ENCODE measurements at regions of chr3 and their contacts with region 1.

Region 1: DNA sequence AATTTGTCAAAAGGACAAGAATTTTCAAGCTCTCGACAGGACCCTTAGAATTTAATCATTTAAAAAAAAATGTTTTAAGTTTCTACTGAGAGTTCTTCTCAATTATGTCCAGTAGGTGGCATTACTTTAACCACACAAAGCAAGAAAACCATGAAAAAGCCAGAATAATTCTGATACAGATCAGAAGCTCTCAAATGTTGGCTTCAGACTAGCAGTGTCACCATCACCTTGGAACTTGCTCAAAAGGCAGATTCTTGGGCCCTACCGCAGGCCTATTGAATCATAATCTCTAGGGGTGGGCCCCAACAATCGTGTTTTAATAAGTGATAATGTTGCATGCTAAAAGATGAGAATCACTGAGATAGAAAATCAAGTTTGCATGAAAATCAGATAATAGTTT is 99.5 kb upstream of the KCNMB2 start:
- DNase-seq: no peak
- ATAC-seq: peak; percentile 80
- H3K4me3 ChIP-seq: no peak overlapping the region
- H3K27ac ChIP-seq: no peak overlapping the region
- H3K4me1 ChIP-seq: peaks cover 5% of the 10 kb centered on the region
- H3K27me3 ChIP-seq: no peaks in the 10 kb centered on the region
- CTCF ChIP-seq: peak; percentile 28 to 57 (median 51); a peak in 5 of 6 replicates
- EP300 ChIP-seq: no peak
- POLR2A ChIP-seq: no peak
- RAD21 ChIP-seq: peak; percentile 74

Region 2: GRCh38 chr3:178182337-178182779 is 254.4 kb before region 1 on chr3:
- CTCF ChIA-PET with region 1: no interaction called
- POLR2A ChIA-PET with region 1: no interaction called
- RAD21 ChIA-PET with region 1: no interaction called
- SMC1A ChIA-PET with region 1: no interaction called
- in situ Hi-C with region 1: no loop called
- intact Hi-C with region 1: no loop called
- DNase-seq: no peak
- ATAC-seq: no peak
- H3K4me3 ChIP-seq: no peak overlapping the region
- H3K27ac ChIP-seq: no peak overlapping the region
- H3K4me1 ChIP-seq: no peaks in the 10 kb centered on the region
- H3K27me3 ChIP-seq: no peaks in the 10 kb centered on the region; a peak in 1 of 4 replicates
- CTCF ChIP-seq: no peak
- EP300 ChIP-seq: no peak
- POLR2A ChIP-seq: no peak
- RAD21 ChIP-seq: no peak

Region 3: GRCh38 chr3:178419071-178419470 is 17.7 kb before region 1 on chr3:
- CTCF ChIA-PET with region 1: interaction called, 19 read pairs
- POLR2A ChIA-PET with region 1: no interaction called
- RAD21 ChIA-PET with region 1: interaction called, 6 read pairs
- SMC1A ChIA-PET with region 1: interaction called, 8 read pairs
- in situ Hi-C with region 1: no loop called
- intact Hi-C with region 1: no loop called
- DNase-seq: no peak
- ATAC-seq: no peak
- H3K4me3 ChIP-seq: no peak overlapping the region
- H3K27ac ChIP-seq: no peak overlapping the region
- H3K4me1 ChIP-seq: no peaks in the 10 kb centered on the region
- H3K27me3 ChIP-seq: no peaks in the 10 kb centered on the region
- CTCF ChIP-seq: no peak
- EP300 ChIP-seq: no peak
- POLR2A ChIP-seq: no peak
- RAD21 ChIP-seq: no peak

Region 4: DNA sequence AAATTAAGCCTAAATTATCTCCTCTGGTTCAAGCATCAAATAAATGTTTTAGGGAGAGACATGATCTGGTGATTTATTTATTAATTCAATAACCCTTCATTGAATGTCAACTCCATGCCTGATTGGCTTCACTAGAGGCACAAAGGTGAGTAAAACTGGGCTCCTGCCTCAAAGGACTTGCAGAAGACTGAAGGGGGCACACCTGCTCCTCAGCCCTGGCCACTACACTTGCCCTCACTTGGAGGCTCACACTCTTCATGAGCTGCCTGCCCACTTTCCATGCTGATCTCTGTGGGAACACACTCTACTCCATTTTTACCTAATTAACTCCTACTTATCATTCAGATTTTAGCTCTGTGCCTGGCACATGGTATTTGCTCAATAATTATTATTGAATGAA is 15.0 kb after region 1 on chr3:
- CTCF ChIA-PET with region 1: interaction called, 10 read pairs
- POLR2A ChIA-PET with region 1: interaction called, 4 read pairs
- RAD21 ChIA-PET with region 1: interaction called, 3 read pairs
- SMC1A ChIA-PET with region 1: interaction called, 12 read pairs
- in situ Hi-C with region 1: no loop called
- intact Hi-C with region 1: no loop called
- DNase-seq: no peak
- ATAC-seq: peak; percentile 42; the same call in 1 of the 3 replicates
- H3K4me3 ChIP-seq: no peak overlapping the region
- H3K27ac ChIP-seq: no peak overlapping the region
- H3K4me1 ChIP-seq: no peaks in the 10 kb centered on the region
- H3K27me3 ChIP-seq: no peaks in the 10 kb centered on the region
- CTCF ChIP-seq: peak in 2 of 3 experiments; percentile 7 to 11; a peak in 1 of 6 replicates
- EP300 ChIP-seq: no peak
- POLR2A ChIP-seq: no peak
- RAD21 ChIP-seq: peak; percentile 54

Region 5: DNA sequence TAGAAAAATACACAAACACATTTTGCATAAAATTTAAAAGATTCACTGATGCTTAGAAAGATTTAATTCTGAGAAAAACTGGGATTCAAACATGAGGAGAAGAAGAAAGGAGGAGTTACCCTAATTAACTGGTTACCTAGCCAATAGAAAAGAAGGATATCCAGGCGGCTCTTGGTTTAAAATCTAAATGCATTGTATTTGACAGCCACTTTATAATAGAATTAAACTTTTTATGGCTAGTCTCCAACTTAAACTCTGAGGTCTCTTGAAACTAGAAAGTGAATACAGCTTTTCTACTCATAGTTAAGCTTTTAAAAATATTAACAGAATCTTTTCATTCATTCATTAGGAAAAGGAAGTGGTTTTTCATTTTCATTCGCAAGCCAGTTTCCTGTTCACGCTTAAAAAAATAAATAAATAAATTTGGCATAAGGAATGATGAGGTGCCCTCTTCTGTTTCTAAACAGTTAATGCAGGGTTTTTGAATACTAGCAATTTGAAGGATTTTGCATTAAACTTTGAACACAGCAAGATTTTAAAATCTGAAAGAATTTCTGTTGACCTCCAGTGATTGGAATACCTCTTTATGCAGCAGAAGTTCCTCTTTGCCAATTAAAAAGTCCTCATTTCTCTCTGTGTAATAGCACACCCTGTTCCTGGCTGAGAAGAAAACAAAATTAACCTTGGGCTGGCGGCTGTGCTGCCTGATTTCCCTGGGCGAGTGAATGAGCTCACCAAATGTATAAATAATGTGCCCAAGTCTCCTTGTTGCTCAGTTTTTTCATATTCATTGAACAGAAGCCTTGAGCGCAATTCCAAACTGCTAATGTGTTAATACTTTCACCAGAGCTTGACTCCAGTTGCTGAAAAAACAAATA is 529.8 kb after region 1 on chr3:
- CTCF ChIA-PET with region 1: interaction called, 138 read pairs
- POLR2A ChIA-PET with region 1: interaction called, 9 read pairs
- RAD21 ChIA-PET with region 1: interaction called, 72 read pairs
- SMC1A ChIA-PET with region 1: interaction called, 58 read pairs
- in situ Hi-C with region 1: no loop called
- intact Hi-C with region 1: loop called (anchors 1 kb)
- DNase-seq: peak; percentile 32
- ATAC-seq: peak; percentile 26
- H3K4me3 ChIP-seq: peak overlapping the region; percentile 39; the same call in 1 of the 2 replicates
- H3K27ac ChIP-seq: peak overlapping the region; percentile 73
- H3K4me1 ChIP-seq: peaks cover 32% of the 10 kb centered on the region
- H3K27me3 ChIP-seq: no peaks in the 10 kb centered on the region
- CTCF ChIP-seq: peak; percentile 41 to 61 (median 45); a peak in 5 of 6 replicates
- EP300 ChIP-seq: no peak; a peak in 1 of 4 replicates
- POLR2A ChIP-seq: no peak
- RAD21 ChIP-seq: peak; percentile 91

Region 6: DNA sequence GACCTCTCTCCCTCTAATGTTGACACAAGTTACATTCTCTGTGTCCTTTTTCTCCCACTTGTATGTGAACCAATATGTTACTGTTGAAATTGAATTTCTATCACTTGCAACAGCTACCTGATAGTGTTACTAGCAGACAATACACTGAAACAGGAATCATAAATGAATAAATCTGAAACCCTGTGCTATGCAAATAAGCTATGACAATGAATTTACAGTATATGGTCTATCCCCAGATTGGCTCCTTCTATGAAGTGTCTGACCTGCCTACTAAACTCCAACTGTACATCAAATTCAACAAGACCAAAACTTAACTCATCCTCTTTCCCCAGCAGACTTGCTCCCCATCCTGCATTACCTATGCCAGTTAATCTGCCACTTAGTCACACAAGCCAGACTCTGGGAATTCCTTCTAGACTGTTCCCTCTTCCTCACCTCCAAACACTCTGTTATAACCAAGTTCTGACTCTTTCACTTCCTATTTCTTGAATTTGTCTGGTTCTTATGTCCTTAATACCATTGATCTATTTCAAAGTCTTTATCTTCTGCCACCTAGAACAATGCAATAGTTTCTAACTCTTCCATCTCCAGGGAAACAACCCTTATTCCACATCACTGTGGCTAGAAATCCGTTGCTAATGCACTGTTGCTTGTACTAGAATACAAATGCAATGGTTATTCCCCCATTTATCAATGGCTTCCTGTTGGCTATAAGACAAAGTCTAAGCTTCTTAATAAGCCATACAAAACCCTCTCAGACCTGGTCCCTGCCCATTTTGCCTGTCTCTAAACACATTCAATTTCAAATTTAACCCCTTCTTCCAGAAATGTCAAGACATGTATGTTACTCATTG is 872.7 kb after region 1 on chr3:
- CTCF ChIA-PET with region 1: no interaction called
- POLR2A ChIA-PET with region 1: no interaction called
- RAD21 ChIA-PET with region 1: no interaction called
- SMC1A ChIA-PET with region 1: interaction called, 4 read pairs
- in situ Hi-C with region 1: loop called (anchors 10 kb)
- intact Hi-C with region 1: no loop called
- DNase-seq: no peak
- ATAC-seq: peak; percentile 95
- H3K4me3 ChIP-seq: no peak overlapping the region
- H3K27ac ChIP-seq: no peak overlapping the region
- H3K4me1 ChIP-seq: peaks cover 4% of the 10 kb centered on the region
- H3K27me3 ChIP-seq: no peaks in the 10 kb centered on the region
- CTCF ChIP-seq: no peak
- EP300 ChIP-seq: no peak
- POLR2A ChIP-seq: no peak
- RAD21 ChIP-seq: no peak

Region 7: GRCh38 chr3:179562591-179563270 is 1126.0 kb after region 1 on chr3 and contains the start of gene ACTL6A:
- CTCF ChIA-PET with region 1: no interaction called
- POLR2A ChIA-PET with region 1: no interaction called
- RAD21 ChIA-PET with region 1: no interaction called
- SMC1A ChIA-PET with region 1: interaction called, 3 read pairs
- in situ Hi-C with region 1: loop called (anchors 25 kb)
- intact Hi-C with region 1: loop called (anchors 5 kb)
- DNase-seq: peak; percentile 98
- ATAC-seq: peak; percentile 96
- H3K4me3 ChIP-seq: peak within 1 kb of the TSS; percentile 96
- H3K27ac ChIP-seq: peak within 1 kb of the TSS; percentile 75
- H3K4me1 ChIP-seq: no peaks in the 10 kb centered on the region
- H3K27me3 ChIP-seq: no peaks in the 10 kb centered on the region; a peak in 1 of 4 replicates
- CTCF ChIP-seq: no peak
- EP300 ChIP-seq: 0 out of 4 replicates have a peak, but pooled peaks of 1 of the 2 experiments have one; percentile 9
- POLR2A ChIP-seq: peak; percentile 92
- RAD21 ChIP-seq: no peak
- polyA plus RNA-seq, gene ACTL6A: 102 to 123 TPM

Measured in GM12878 (cell line).